ENCODE measurements at regions of chr2 and their contacts with region 1.

Region 1: DNA sequence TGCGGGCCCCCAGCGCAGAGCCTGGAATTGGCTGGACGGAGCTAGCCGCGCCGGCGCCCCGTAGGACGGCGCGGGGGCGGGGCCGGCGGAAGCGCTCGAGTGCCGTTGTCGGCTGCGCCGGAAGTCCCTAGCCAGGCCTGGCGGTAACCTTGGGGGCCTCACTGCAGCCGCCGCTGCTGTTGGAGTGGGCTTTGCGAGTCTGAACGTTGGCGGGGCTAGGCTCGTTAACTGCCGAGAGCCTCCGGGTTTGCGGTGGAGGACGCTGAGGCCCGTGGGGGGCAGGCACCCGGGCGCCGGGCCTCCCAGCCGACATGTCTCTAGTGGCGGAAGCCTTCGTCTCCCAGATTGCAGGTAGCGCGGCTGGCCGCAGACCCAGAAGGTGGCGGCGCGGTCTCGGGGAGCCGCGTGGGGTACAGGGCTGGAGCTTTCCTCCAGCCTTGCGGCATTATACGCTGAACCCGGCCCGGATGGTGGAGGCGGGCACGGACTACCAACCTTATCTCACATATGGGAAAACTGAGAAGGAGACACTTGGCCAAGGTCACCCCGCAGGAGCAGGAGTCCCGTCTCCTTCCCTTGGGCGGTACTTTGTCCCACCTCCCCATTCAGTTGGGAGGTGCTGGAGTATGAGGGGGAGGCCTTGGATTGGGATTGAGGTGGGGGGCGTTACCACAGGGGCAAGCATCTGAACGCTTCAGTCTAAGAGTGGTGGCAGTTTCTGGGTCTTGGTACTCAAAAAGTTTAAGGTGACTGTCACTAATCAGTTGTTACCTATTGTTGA is at the start of gene MTX2:
- DNase-seq: peak; percentile 78 to 88 (median 82)
- ATAC-seq: peak; percentile 93 to 100 (median 99)
- H3K4me3 ChIP-seq: peak within 1 kb of the TSS; percentile 59 to 98 (median 94)
- H3K27ac ChIP-seq: peak within 1 kb of the TSS; percentile 79 to 96 (median 92)
- H3K4me1 ChIP-seq: peaks cover 0 to 38% (median 13%) of the 10 kb centered on the region in 12 donors
- H3K27me3 ChIP-seq: no peaks in the 10 kb centered on the region
- CTCF ChIP-seq: peak in 4 of 12 donors; percentile 21 to 36 (median 28)
- POLR2A ChIP-seq: peak in 1 of 2 donors; percentile 67
- total RNA-seq, gene MTX2: 37.6 to 57.8 (median 43.2) TPM

Region 2: GRCh38 chr2:176157499-176158185 is 111.9 kb before region 1 on chr2:
- intact Hi-C with region 1: loop called in 1 of 10 experiments (anchors 10 kb)
- DNase-seq: no peak
- ATAC-seq: no peak
- H3K4me3 ChIP-seq: peak overlapping the region in 10 of 12 donors; percentile 1 to 44 (median 16)
- H3K27ac ChIP-seq: peak overlapping the region in 1 of 12 donors; percentile 29
- H3K4me1 ChIP-seq: peaks cover 0 to 37% (median 16%) of the 10 kb centered on the region in 12 donors
- H3K27me3 ChIP-seq: peaks cover 70 to 100% (median 98%) of the 10 kb centered on the region in 9 donors
- CTCF ChIP-seq: no peak
- POLR2A ChIP-seq: no peak

Region 3: GRCh38 chr2:176178038-176178756 is 91.3 kb before region 1 on chr2:
- intact Hi-C with region 1: loop called in 1 of 10 experiments (anchors 10 kb)
- DNase-seq: peak in 1 of 5 donors; percentile 66
- ATAC-seq: peak in 3 of 4 donors; percentile 29 to 59 (median 48)
- H3K4me3 ChIP-seq: peak overlapping the region in 11 of 12 donors; percentile 5 to 54 (median 40)
- H3K27ac ChIP-seq: peak overlapping the region in 4 of 12 donors; percentile 8 to 83 (median 69)
- H3K4me1 ChIP-seq: peaks cover 0 to 19% (median 0%) of the 10 kb centered on the region in 12 donors
- H3K27me3 ChIP-seq: peaks cover 35 to 100% (median 70%) of the 10 kb centered on the region in 9 donors
- CTCF ChIP-seq: no peak
- POLR2A ChIP-seq: no peak

Region 4: GRCh38 chr2:176398243-176399073 is 128.9 kb after region 1 on chr2:
- intact Hi-C with region 1: loop called in 1 of 10 experiments (anchors 10 kb)
- DNase-seq: no peak
- ATAC-seq: no peak
- H3K4me3 ChIP-seq: no peak overlapping the region
- H3K27ac ChIP-seq: no peak overlapping the region
- H3K4me1 ChIP-seq: no peaks in the 10 kb centered on the region
- H3K27me3 ChIP-seq: no peaks in the 10 kb centered on the region
- CTCF ChIP-seq: no peak
- POLR2A ChIP-seq: no peak

Region 5: GRCh38 chr2:176445956-176446355 is 176.4 kb after region 1 on chr2:
- intact Hi-C with region 1: loop called in 1 of 10 experiments (anchors 5 kb)
- DNase-seq: no peak
- ATAC-seq: no peak
- H3K4me3 ChIP-seq: no peak overlapping the region
- H3K27ac ChIP-seq: no peak overlapping the region
- H3K4me1 ChIP-seq: peaks cover 0 to 7% (median 0%) of the 10 kb centered on the region in 12 donors
- H3K27me3 ChIP-seq: peaks cover 0 to 5% (median 0%) of the 10 kb centered on the region in 9 donors
- CTCF ChIP-seq: no peak
- POLR2A ChIP-seq: no peak

Region 6: GRCh38 chr2:176491172-176491904 is 221.8 kb after region 1 on chr2:
- intact Hi-C with region 1: no loop called
- DNase-seq: peak; percentile 53 to 83 (median 72)
- ATAC-seq: peak; percentile 72 to 92 (median 90)
- H3K4me3 ChIP-seq: peak overlapping the region in 1 of 12 donors; percentile 28
- H3K27ac ChIP-seq: peak overlapping the region; percentile 14 to 90 (median 68)
- H3K4me1 ChIP-seq: peaks cover 0 to 60% (median 24%) of the 10 kb centered on the region in 12 donors
- H3K27me3 ChIP-seq: peaks cover 0 to 9% (median 0%) of the 10 kb centered on the region in 9 donors
- CTCF ChIP-seq: no peak
- POLR2A ChIP-seq: no peak

Region 7: DNA sequence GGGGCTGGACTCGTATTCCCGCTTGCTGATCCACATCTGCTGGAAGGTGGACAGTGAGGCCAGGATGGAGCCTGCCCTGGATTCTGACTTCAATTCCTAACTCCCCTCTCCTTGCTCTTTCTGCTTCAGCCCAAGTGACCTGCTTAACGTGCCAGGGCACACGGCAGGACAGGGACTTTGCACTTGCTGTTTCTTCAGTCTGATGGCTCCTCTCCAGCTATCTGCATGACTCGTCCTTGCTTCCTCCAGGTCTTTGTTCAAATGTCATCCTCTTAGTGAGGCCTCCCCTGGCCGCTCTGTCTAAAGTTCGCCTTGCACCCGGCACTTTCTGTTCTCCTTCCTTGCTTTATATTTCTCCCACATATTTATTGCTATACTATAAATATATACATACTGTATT is 357.3 kb after region 1 on chr2:
- intact Hi-C with region 1: no loop called
- DNase-seq: no peak
- ATAC-seq: no peak
- H3K4me3 ChIP-seq: no peak overlapping the region
- H3K27ac ChIP-seq: no peak overlapping the region
- H3K4me1 ChIP-seq: no peaks in the 10 kb centered on the region
- H3K27me3 ChIP-seq: peaks cover 0 to 41% (median 0%) of the 10 kb centered on the region in 9 donors
- CTCF ChIP-seq: no peak
- POLR2A ChIP-seq: no peak